Left ventricle myocardium inferior (tissue), 1 donor: ENCODE measurements at regions of chr13 and their contacts with region 1.

Region 1: GRCh38 chr13:29210676-29211075 is 384.8 kb downstream of the SLC7A1 start:
- DNase-seq: no peak
- H3K4me3 ChIP-seq: no peak overlapping the region
- H3K27ac ChIP-seq: no peak overlapping the region
- H3K4me1 ChIP-seq: no peaks in the 10 kb centered on the region
- H3K27me3 ChIP-seq: no peaks in the 10 kb centered on the region
- CTCF ChIP-seq: no peak

Region 2: GRCh38 chr13:29354377-29354776 is 143.7 kb after region 1 on chr13:
- intact Hi-C with region 1: loop called (anchors 5 kb)
- DNase-seq: no peak
- H3K4me3 ChIP-seq: no peak overlapping the region
- H3K27ac ChIP-seq: no peak overlapping the region
- H3K4me1 ChIP-seq: no peaks in the 10 kb centered on the region
- H3K27me3 ChIP-seq: no peaks in the 10 kb centered on the region
- CTCF ChIP-seq: no peak